Mammary epithelial cell (primary cell): ENCODE measurements at regions of chr6 and their contacts with region 1.

Region 1: DNA sequence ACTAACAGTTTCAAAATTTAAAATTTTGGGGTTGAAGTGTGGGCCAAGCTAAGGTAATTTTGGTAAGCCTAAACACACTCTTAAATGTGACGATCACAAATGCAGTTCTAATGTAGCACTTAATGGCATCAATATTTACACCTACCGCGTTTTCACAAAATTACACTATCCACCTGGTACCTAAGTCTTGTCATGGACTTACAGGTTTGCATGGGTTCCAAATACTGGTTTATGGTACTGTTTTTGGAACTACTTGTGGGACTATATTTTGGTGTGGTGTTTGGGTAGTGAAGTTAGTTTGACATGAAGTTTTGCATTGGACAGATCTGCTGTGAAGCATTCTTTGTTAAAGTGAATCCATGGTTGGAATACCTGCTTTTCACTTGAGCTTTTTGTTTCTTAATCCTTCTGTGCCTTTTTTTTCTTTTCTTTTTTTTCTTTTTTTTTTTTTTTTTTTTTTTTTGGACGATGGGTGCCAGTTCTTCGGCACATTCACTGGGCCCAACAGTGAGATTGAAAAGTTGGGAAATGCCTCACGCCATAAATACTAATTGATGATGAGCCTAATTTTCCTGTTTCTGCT is 6.5 kb downstream of the SRSF3 start:
- DNase-seq: no peak
- H3K4me3 ChIP-seq: peak overlapping the region in 1 of 3 experiments; percentile 92
- H3K27ac ChIP-seq: no peak overlapping the region
- H3K4me1 ChIP-seq: peaks cover 52% of the 10 kb centered on the region
- H3K27me3 ChIP-seq: no peaks in the 10 kb centered on the region
- CTCF ChIP-seq: no peak

Region 2: DNA sequence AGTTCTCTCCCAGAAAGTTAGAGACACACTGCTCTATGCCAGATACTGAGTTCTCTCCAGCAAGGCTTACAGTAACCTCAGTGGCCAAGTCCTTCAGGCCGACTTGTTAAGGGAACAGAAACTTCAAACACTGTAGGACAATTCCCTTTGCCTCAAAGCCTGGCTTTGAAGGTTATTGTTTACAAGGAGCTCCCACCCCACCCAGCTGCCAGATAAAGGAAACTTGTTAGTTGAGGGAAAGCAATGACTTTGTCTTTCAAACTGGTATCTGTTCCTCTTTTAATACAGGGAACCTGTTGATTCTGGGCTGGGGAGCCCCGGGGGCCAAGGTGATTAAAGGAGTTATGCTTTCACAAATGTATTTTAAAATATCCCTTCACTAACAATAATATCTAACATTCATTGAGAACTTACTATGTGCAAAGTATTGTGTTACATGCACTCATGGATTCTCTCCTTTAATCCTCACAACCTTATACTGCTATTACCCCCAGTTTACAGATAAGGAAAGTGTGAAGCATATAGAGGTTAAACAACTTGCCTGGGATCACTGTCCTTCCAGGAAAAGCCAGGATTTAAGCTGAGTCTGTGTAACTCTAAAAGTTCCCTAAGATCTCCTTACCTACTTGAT is 50.3 kb after region 1 on chr6:
- CTCF ChIA-PET with region 1: no interaction called
- dilution Hi-C with region 1: no loop called
- in situ Hi-C with region 1: no loop called
- intact Hi-C with region 1: no loop called
- DNase-seq: no peak
- H3K4me3 ChIP-seq: no peak overlapping the region
- H3K27ac ChIP-seq: no peak overlapping the region
- H3K4me1 ChIP-seq: peaks cover 8% of the 10 kb centered on the region
- H3K27me3 ChIP-seq: no peaks in the 10 kb centered on the region
- CTCF ChIP-seq: no peak

Region 3: GRCh38 chr6:36874443-36875249 is 274.0 kb after region 1 on chr6 and contains the start of gene PPIL1:
- CTCF ChIA-PET with region 1: interaction called, 24 read pairs
- dilution Hi-C with region 1: no loop called
- in situ Hi-C with region 1: no loop called
- intact Hi-C with region 1: no loop called
- DNase-seq: peak; percentile 88
- H3K4me3 ChIP-seq: peak within 1 kb of the TSS; percentile 61 to 78 (median 76)
- H3K27ac ChIP-seq: peak within 1 kb of the TSS; percentile 95
- H3K4me1 ChIP-seq: peaks cover 15% of the 10 kb centered on the region
- H3K27me3 ChIP-seq: no peaks in the 10 kb centered on the region
- CTCF ChIP-seq: no peak
- total RNA-seq, gene PPIL1: 24.0 to 33.5 TPM